WTC11 (cell line): ENCODE measurements at regions of chr3 and their contacts with region 1.

Region 1: DNA sequence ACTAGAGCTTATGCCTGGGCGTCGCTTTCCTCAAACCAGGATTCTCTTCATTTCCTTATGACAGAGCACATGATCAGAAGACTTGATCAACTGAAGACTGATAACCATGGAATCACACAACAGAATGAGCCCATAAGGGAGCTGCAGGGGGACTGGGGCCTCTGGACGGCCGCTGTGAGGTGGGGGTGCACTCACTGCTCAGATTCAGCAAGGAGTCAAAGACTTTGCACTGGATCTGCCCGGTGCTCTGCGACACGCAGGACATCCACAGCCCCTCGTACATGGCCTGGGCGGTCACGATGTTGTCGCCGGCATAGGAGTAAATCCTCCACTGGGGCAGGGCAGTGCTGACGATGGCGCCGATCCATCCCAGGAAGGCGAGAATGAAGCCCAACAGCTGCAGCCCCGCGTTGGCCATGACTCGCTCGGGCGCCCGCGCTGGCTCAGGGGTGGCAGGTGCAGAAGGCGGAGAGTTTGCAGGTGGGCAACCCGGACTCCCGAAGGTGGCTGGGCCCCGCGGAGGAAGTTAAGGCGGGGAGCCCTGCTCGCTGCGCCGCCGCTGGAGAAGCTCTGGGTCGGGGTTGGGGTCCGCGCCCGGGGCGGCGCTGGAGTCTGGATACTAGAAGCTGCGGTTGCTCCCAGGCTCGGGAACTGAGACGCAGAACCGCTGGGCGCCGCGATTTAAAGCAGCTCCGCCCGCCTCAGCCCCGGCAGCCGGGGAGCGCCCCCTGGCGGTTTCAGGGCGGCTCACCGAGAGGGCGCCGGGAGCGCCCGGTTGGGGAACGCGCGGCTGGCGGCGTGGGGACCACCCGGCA is at the start of gene CLDN1:
- DNase-seq: peak; percentile 92
- ATAC-seq: peak; percentile 90
- H3K4me3 Mint-ChIP-seq: peak within 1 kb of the TSS; percentile 84
- H3K27ac Mint-ChIP-seq: peak within 1 kb of the TSS; percentile 58; the same call in 1 of the 2 replicates
- H3K4me1 Mint-ChIP-seq: peaks cover 57% of the 10 kb centered on the region
- H3K27me3 Mint-ChIP-seq: peaks cover 18% of the 10 kb centered on the region
- CTCF ChIP-seq: peak; percentile 94
- total RNA-seq, gene CLDN1: 4.4 to 5.9 TPM (median 5.7 TPM) in 3 replicates

Region 2: DNA sequence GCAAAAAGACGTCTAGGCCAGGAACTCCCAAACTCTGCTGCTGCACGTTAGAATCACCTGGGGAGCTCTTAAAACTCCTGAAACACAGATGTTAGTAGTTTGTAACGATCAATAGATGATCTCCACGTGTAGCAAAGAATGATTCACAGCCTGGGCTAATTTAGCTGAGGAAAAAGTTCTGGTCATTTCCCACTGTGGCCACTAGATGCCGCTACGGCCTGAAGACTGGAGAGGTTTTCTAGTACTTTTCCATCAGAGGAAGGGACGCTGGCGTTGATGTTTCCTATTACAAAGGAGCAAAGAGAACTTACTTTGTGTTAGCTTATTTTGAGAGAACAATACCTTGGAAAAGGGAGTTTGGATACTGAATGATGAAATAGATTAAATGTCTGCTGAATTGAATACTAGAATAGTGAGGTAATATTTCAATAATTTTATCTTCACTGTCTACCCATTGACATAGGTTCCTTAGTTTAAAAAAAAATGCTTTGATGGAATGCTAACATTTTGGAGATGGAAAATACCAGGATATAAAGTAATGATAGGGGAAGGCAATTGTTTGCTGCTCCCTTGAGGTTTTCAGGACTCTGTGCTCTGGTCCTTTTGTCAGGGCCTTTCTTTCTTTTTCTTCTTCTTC is 360.4 kb before region 1 on chr3:
- CTCF ChIA-PET with region 1: interaction called, 77 read pairs
- POLR2A ChIA-PET with region 1: interaction called, 9 read pairs
- DNase-seq: peak; percentile 85
- ATAC-seq: peak; percentile 58
- H3K4me3 Mint-ChIP-seq: no peak overlapping the region
- H3K27ac Mint-ChIP-seq: peak overlapping the region; percentile 64
- H3K4me1 Mint-ChIP-seq: peaks cover 23% of the 10 kb centered on the region
- H3K27me3 Mint-ChIP-seq: no peaks in the 10 kb centered on the region
- CTCF ChIP-seq: peak; percentile 89

Region 3: DNA sequence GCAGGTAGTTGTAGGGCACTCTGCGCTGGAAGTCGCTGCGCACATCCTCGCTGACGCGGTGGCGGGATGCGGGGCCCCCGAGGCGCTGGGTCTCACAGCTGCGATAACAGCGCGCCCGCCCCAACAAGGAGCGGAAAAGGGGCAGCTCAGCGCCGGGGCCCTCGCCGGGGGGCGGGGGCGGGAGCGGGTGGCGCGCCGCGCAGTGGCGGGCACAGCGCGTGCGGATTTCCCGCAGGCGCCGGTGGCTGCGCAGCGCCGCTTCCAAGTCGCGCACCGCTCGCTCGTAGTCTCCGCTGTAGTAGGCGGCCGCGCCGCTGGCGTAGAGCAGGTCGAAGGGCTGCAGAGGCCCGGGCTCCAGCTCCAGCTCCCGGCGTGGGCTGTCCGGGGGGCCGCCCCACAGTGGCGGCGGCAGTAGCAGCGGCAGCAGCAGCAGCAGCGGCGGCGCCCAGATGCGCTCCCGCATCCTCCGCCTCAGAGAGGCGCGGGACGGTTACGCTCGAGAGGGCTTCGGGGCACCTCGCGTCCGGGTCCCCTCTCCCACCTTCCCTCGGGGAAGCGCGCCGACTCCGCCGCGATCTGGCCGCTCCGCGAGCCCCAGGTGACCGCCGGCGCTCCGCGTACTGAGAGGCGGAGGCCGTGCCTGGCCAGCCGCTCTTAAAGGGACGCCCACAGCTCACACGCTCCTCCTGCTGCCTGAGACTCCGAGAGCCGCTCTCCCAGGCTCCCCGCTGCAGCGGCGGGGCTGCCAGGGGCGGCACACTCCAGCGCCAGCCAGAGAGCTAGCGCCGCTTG is 201.5 kb before region 1 on chr3 and contains the start of gene P3H2:
- CTCF ChIA-PET with region 1: interaction called, 12 read pairs
- POLR2A ChIA-PET with region 1: no interaction called
- DNase-seq: peak; percentile 84
- ATAC-seq: peak; percentile 97
- H3K4me3 Mint-ChIP-seq: peak within 1 kb of the TSS; percentile 85
- H3K27ac Mint-ChIP-seq: no peak within 1 kb of the TSS; the same call in 1 of the 2 replicates
- H3K4me1 Mint-ChIP-seq: peaks cover 61% of the 10 kb centered on the region
- H3K27me3 Mint-ChIP-seq: peaks cover 26% of the 10 kb centered on the region
- CTCF ChIP-seq: no peak
- total RNA-seq, gene P3H2: 29.4 to 39.9 TPM (median 36.2 TPM) in 3 replicates

Region 4: DNA sequence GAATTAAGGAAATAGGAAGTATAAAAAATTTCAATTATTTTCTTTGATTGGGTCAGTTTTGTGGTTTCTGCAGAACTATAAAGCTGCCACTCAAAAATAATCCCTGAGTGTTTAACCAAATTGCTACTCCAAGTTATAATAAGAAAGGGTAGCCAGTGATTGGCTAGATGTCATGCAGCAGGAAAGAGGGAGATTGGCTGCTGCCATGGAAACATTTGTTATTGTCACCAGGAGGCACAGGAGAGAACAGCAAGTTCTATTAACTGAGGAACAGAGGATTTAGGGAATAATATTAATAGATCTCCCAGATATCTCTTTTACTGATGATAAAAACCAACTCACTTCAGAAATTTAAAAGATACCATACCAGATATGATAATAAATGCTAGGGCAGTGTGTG is 42.3 kb before region 1 on chr3:
- CTCF ChIA-PET with region 1: interaction called, 15 read pairs
- POLR2A ChIA-PET with region 1: no interaction called
- DNase-seq: no peak
- ATAC-seq: peak; percentile 60; the same call in 1 of the 2 replicates
- H3K4me3 Mint-ChIP-seq: no peak overlapping the region
- H3K27ac Mint-ChIP-seq: no peak overlapping the region
- H3K4me1 Mint-ChIP-seq: peaks cover 6% of the 10 kb centered on the region
- H3K27me3 Mint-ChIP-seq: no peaks in the 10 kb centered on the region; the same call in 1 of the 2 replicates
- CTCF ChIP-seq: no peak

Region 5: DNA sequence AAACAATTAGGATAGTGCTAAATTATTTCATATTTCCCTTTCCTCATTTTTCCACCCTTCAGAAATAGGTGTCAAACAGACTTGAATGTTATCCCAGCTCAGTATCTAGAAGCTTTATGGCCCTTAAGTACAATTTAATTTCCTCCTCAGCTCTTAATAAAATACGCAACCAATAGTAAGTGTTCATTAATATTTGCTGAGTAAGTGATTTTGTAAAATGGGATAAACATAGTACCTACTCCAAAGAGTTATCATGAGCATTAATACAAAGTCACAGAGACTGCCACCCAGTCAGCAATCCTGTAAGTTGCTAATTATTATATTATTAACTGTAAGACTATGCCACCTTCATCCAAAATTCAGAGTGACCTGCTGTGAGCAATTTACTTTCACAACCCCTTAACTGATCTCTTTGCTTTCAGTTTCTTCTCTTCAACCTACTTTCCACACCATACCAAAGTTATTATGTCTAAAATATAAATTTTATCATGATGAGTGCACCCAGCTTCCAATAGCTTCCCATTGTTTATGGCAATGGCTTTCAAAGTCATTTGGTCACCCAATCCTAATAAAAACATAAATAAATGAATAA is 31.0 kb after region 1 on chr3:
- CTCF ChIA-PET with region 1: interaction called, 14 read pairs
- POLR2A ChIA-PET with region 1: no interaction called
- DNase-seq: no peak
- ATAC-seq: no peak
- H3K4me3 Mint-ChIP-seq: no peak overlapping the region
- H3K27ac Mint-ChIP-seq: no peak overlapping the region
- H3K4me1 Mint-ChIP-seq: peaks cover 23% of the 10 kb centered on the region
- H3K27me3 Mint-ChIP-seq: no peaks in the 10 kb centered on the region
- CTCF ChIP-seq: no peak

Region 6: GRCh38 chr3:190424478-190425439 is 102.8 kb after region 1 on chr3:
- CTCF ChIA-PET with region 1: interaction called, 11 read pairs
- POLR2A ChIA-PET with region 1: interaction called, 4 read pairs
- DNase-seq: peak; percentile 78
- ATAC-seq: peak; percentile 96
- H3K4me3 Mint-ChIP-seq: peak overlapping the region; percentile 7; the same call in 1 of the 2 replicates
- H3K27ac Mint-ChIP-seq: 0 out of 2 replicates have a peak overlapping the region, but pooled peaks have one; percentile 50
- H3K4me1 Mint-ChIP-seq: no peaks in the 10 kb centered on the region
- H3K27me3 Mint-ChIP-seq: no peaks in the 10 kb centered on the region
- CTCF ChIP-seq: peak; percentile 58; the same call in 1 of the 2 replicates

Region 7: DNA sequence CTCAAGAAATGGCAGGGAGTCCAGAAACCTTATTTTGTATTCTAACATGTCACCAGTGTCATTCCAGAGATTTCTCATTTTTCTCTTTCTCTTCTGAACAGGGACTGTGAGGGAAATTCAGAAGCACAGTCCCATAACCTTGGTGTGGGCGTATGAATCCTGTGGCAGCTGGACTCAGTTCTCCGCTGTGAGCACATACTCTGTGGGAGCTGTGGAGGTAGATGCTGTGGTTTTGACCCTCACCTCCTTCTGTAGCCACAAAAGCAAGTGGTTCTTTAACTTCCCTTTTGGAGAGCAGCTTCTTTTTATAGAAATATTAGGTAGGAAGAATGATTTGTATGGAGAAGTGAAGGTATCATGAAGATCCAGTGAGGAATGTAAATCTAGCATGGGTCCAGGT is 114.3 kb after region 1 on chr3:
- CTCF ChIA-PET with region 1: no interaction called
- POLR2A ChIA-PET with region 1: no interaction called
- DNase-seq: no peak
- ATAC-seq: no peak
- H3K4me3 Mint-ChIP-seq: no peak overlapping the region
- H3K27ac Mint-ChIP-seq: no peak overlapping the region
- H3K4me1 Mint-ChIP-seq: no peaks in the 10 kb centered on the region
- H3K27me3 Mint-ChIP-seq: no peaks in the 10 kb centered on the region; the same call in 1 of the 2 replicates
- CTCF ChIP-seq: no peak